Caco-2 (cell line): ENCODE measurements at regions of chr3 and their contacts with region 1.

Region 1: GRCh38 chr3:9352917-9353752 is 9.7 kb upstream of the THUMPD3 start:
- DNase-seq: peak; percentile 73
- H3K4me3 ChIP-seq: 0 out of 2 replicates have a peak overlapping the region, but pooled peaks have one; percentile 0
- H3K4me3 Mint-ChIP-seq: peak overlapping the region; percentile 71
- H3K27ac Mint-ChIP-seq: peak overlapping the region; percentile 91
- H3K4me1 ChIP-seq: peaks cover 60% of the 10 kb centered on the region
- H3K4me1 Mint-ChIP-seq: peaks cover 49% of the 10 kb centered on the region
- H3K27me3 ChIP-seq: no peaks in the 10 kb centered on the region
- H3K27me3 Mint-ChIP-seq: no peaks in the 10 kb centered on the region
- CTCF ChIP-seq: peak; percentile 75 to 77

Region 2: DNA sequence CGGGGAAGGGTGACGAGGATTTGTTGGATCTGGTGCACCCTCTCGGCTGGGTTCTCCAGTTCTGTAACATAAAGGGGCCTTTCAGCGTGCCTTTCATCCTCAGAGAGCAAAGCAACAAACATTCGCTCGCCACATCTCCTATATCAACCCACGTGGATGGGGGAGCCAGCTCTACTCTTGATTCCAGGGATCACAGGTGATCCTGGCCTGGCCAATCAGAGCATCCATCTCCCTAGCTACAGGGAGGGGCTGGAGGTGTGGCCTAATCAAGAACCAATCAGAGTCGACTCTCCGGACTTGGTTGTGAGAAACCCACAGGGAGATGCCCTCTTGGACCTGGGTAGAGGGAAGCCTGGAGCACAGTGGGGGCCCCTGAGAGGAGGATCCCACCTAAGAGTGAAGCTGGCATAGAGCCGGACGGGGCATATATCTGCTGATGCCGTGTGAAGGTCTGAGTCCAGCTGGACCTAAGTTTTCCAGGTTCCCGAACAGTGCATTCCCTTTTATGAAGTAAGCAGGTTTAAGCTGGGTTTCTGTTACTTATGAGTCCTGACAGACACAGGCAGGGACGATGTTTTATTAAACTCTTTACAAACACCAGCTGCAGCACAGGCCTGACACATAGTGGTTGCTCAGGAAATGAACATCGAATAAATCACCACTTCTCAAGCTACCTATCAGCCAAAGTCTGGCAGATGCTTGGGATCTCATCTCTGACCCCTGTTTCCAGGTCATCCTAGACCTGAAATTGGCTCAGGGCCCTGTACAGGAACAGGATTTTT is 339.2 kb before region 1 on chr3:
- CTCF ChIA-PET with region 1: no interaction called
- POLR2A ChIA-PET with region 1: no interaction called
- intact Hi-C with region 1: no loop called
- DNase-seq: no peak
- H3K4me3 ChIP-seq: no peak overlapping the region
- H3K4me3 Mint-ChIP-seq: no peak overlapping the region
- H3K27ac Mint-ChIP-seq: no peak overlapping the region
- H3K4me1 ChIP-seq: no peaks in the 10 kb centered on the region
- H3K4me1 Mint-ChIP-seq: no peaks in the 10 kb centered on the region
- H3K27me3 ChIP-seq: no peaks in the 10 kb centered on the region
- H3K27me3 Mint-ChIP-seq: peaks cover 16% of the 10 kb centered on the region
- CTCF ChIP-seq: peak in 1 of 2 experiments; percentile 26

Region 3: GRCh38 chr3:9384141-9384853 is 31.2 kb after region 1 on chr3:
- CTCF ChIA-PET with region 1: no interaction called
- POLR2A ChIA-PET with region 1: no interaction called
- intact Hi-C with region 1: loop called (anchors 2 kb)
- DNase-seq: no peak
- H3K4me3 ChIP-seq: no peak overlapping the region
- H3K4me3 Mint-ChIP-seq: no peak overlapping the region
- H3K27ac Mint-ChIP-seq: peak overlapping the region; percentile 1
- H3K4me1 ChIP-seq: no peaks in the 10 kb centered on the region
- H3K4me1 Mint-ChIP-seq: peaks cover 12% of the 10 kb centered on the region
- H3K27me3 ChIP-seq: no peaks in the 10 kb centered on the region
- H3K27me3 Mint-ChIP-seq: no peaks in the 10 kb centered on the region
- CTCF ChIP-seq: no peak

Region 4: GRCh38 chr3:9422712-9423424 is 69.7 kb after region 1 on chr3:
- CTCF ChIA-PET with region 1: interaction called, 8 read pairs
- POLR2A ChIA-PET with region 1: no interaction called
- intact Hi-C with region 1: loop called (anchors 1 kb)
- DNase-seq: peak; percentile 82 to 83
- H3K4me3 ChIP-seq: no peak overlapping the region
- H3K4me3 Mint-ChIP-seq: peak overlapping the region; percentile 69
- H3K27ac Mint-ChIP-seq: peak overlapping the region; percentile 76
- H3K4me1 ChIP-seq: peaks cover 31% of the 10 kb centered on the region
- H3K4me1 Mint-ChIP-seq: peaks cover 29% of the 10 kb centered on the region
- H3K27me3 ChIP-seq: no peaks in the 10 kb centered on the region
- H3K27me3 Mint-ChIP-seq: no peaks in the 10 kb centered on the region
- CTCF ChIP-seq: peak; percentile 44 to 60

Region 5: DNA sequence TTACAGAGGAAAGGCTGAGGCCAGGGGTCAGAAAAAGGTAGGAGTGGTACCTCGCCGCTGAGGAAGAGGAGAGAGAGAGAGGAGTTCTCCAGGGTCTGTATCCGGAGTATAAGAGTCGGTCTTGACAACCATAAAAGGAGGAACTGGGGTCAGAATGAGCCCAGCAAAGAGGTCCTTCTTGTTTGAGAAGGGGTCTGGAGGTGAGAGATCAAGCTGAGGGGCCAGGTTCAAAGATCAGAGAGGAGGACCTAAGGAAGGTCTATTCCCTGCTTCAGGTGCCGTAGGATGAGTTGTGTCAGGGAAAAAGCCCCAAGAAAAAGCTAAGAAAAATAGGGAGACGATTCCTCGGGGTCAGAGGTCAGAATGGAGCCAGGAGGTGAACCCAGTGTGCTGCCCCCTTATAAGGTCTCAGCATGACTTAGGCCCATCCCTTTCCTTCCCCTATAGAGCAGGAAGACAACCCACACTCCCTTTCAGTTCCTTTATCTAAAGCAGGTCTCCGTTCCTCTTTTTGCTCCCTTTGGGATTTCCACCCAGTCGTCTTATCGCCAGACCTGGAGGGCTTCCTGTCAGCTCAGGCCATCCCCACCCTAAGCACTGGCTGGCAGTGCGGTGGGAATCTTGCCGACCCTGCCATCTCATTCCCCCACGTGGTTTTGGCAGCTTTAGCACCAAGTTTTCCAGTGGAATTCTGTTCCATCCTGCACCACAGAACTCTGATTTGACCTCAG is 296.8 kb after region 1 on chr3:
- CTCF ChIA-PET with region 1: interaction called, 4 read pairs
- POLR2A ChIA-PET with region 1: no interaction called
- intact Hi-C with region 1: loop called (anchors 2 kb)
- DNase-seq: no peak
- H3K4me3 ChIP-seq: peak overlapping the region; percentile 91
- H3K4me3 Mint-ChIP-seq: peak overlapping the region; percentile 84
- H3K27ac Mint-ChIP-seq: peak overlapping the region; percentile 72
- H3K4me1 ChIP-seq: no peaks in the 10 kb centered on the region
- H3K4me1 Mint-ChIP-seq: no peaks in the 10 kb centered on the region
- H3K27me3 ChIP-seq: no peaks in the 10 kb centered on the region
- H3K27me3 Mint-ChIP-seq: no peaks in the 10 kb centered on the region
- CTCF ChIP-seq: no peak